Activated naive CD4-positive, alpha-beta T cell treated with anti-CD3 and anti-CD28 coated beads for 36 hours (primary cell): ENCODE measurements at regions of chr4 and their contacts with region 1.

Region 1: GRCh38 chr4:163554870-163555465 is 60.5 kb downstream of the TMA16 start:
- DNase-seq: no peak
- H3K4me3 Mint-ChIP-seq: no peak overlapping the region
- H3K27ac Mint-ChIP-seq: no peak overlapping the region
- H3K4me1 Mint-ChIP-seq: peaks cover 33% of the 10 kb centered on the region
- H3K27me3 Mint-ChIP-seq: no peaks in the 10 kb centered on the region

Region 2: GRCh38 chr4:163598028-163598427 is 43.1 kb after region 1 on chr4:
- CTCF ChIA-PET with region 1: no interaction called
- intact Hi-C with region 1: no loop called
- DNase-seq: no peak
- H3K4me3 Mint-ChIP-seq: no peak overlapping the region
- H3K27ac Mint-ChIP-seq: no peak overlapping the region
- H3K4me1 Mint-ChIP-seq: no peaks in the 10 kb centered on the region
- H3K27me3 Mint-ChIP-seq: no peaks in the 10 kb centered on the region

Region 3: GRCh38 chr4:163663454-163664225 is 108.7 kb after region 1 on chr4:
- CTCF ChIA-PET with region 1: interaction called, 11 read pairs
- intact Hi-C with region 1: no loop called
- DNase-seq: peak; percentile 8
- H3K4me3 Mint-ChIP-seq: no peak overlapping the region
- H3K27ac Mint-ChIP-seq: no peak overlapping the region
- H3K4me1 Mint-ChIP-seq: peaks cover 44% of the 10 kb centered on the region
- H3K27me3 Mint-ChIP-seq: no peaks in the 10 kb centered on the region

Region 4: DNA sequence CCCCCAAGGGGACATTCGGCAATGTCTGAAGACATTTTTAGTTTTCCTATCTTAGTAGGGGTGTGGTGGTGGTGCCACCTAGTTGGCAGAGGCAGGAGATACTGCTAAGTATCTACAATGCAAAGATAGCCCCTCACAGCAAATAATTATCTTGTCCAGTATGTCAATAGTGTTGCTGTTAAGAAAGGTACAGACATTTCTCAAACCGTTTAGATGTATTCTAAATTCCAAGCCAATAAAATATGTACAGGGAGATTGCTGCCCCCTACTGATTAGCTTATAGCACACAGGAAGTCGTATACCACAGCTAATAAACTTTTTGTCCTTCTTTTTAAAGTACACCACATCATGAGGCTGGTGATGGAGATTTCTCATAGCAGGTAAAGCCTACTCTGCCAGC is 200.0 kb after region 1 on chr4:
- CTCF ChIA-PET with region 1: interaction called, 22 read pairs
- intact Hi-C with region 1: loop called (anchors 1 kb)
- DNase-seq: no peak
- H3K4me3 Mint-ChIP-seq: no peak overlapping the region
- H3K27ac Mint-ChIP-seq: no peak overlapping the region
- H3K4me1 Mint-ChIP-seq: peaks cover 2% of the 10 kb centered on the region
- H3K27me3 Mint-ChIP-seq: no peaks in the 10 kb centered on the region

Region 5: DNA sequence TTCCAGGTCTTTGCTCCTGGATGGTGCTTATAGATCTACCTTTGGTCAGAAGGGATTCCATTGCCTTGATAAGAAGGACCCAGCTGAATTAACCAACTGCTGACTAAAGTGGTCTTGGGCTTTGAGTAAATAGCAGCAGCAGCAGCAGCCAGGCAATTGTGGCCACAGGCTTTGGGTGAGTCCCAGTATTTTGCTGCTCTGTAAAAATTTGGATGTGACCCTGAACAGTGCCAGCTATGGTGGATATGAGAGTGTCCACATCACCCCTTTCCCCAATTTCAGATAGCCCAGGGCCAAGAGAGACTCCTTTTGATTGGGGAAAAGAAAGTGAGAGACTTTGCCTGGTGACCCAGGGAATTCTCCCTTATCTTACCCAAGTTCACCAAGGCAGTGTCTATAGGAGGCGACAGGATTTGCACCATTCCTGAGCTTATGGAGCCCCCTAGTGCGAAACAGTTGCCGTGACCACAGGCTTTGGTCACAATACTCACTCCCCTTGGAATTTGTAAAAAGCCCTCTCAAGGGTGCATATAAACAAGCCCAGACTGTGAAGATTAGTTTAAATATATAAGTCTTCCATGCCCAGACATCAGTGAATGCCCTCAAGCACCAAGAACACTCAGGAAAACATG is 457.5 kb after region 1 on chr4:
- CTCF ChIA-PET with region 1: interaction called, 4 read pairs
- intact Hi-C with region 1: loop called (anchors 1 kb)
- DNase-seq: peak; percentile 52
- H3K4me3 Mint-ChIP-seq: no peak overlapping the region
- H3K27ac Mint-ChIP-seq: no peak overlapping the region
- H3K4me1 Mint-ChIP-seq: peaks cover 5% of the 10 kb centered on the region
- H3K27me3 Mint-ChIP-seq: no peaks in the 10 kb centered on the region

Region 6: GRCh38 chr4:164154416-164154815 is 599.4 kb after region 1 on chr4:
- CTCF ChIA-PET with region 1: no interaction called
- intact Hi-C with region 1: no loop called
- DNase-seq: no peak
- H3K4me3 Mint-ChIP-seq: no peak overlapping the region
- H3K27ac Mint-ChIP-seq: no peak overlapping the region
- H3K4me1 Mint-ChIP-seq: no peaks in the 10 kb centered on the region
- H3K27me3 Mint-ChIP-seq: no peaks in the 10 kb centered on the region

Region 7: DNA sequence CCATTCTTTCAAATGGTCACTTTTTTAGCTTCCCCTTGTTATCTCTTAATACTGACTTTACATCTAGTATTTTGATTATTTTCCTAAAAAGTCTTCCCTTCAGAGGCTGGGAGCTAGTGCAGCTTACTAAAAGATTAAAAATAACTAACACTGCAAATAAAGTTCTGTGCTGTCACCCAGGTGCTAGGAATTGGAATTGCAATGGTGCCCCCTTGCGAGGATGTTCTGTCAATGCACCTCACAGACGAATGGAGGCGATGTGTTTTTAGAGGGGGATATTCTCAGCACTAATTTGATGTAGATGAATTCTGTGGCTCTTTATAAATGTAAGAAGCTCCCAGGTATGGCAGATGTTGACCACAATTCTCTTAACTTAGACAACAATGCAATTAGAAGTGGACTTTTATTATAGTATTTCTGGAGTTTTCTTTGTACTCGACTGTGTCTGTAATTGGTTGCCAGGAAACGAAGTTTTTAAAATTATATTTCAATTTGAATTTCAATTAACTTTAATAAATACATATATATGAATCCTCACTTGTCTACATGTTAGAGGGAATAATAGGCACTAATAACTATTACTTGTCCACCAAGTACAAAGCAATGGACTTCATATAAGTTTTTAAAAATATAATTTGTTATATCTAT is 1177.0 kb after region 1 on chr4:
- CTCF ChIA-PET with region 1: interaction called, 14 read pairs
- intact Hi-C with region 1: loop called (anchors 1 kb)
- DNase-seq: peak; percentile 72
- H3K4me3 Mint-ChIP-seq: no peak overlapping the region
- H3K27ac Mint-ChIP-seq: no peak overlapping the region
- H3K4me1 Mint-ChIP-seq: peaks cover 6% of the 10 kb centered on the region
- H3K27me3 Mint-ChIP-seq: peaks cover 9% of the 10 kb centered on the region

Region 8: DNA sequence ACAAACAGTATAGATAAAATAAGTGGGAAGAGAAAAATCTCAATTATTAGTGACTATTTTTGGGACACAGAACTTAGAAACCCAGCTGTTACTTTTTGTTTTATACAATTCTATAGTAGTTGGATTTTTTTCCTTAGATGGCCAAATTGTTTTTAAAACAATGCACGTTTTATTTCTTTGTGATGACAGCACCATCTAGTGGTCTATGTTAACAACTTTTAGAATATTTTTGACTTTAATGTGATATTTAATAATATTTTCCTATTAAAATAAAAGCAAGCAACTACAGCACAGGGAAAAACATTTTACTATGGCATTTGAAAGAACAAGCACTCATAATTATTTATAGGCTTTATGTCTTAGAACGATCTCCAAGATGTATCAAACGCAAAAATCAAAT is 1193.4 kb after region 1 on chr4:
- CTCF ChIA-PET with region 1: no interaction called
- intact Hi-C with region 1: loop called (anchors 1 kb)
- DNase-seq: no peak
- H3K4me3 Mint-ChIP-seq: no peak overlapping the region
- H3K27ac Mint-ChIP-seq: no peak overlapping the region
- H3K4me1 Mint-ChIP-seq: no peaks in the 10 kb centered on the region
- H3K27me3 Mint-ChIP-seq: peaks cover 9% of the 10 kb centered on the region